ENCODE measurements at regions of chr19 and their contacts with region 1.

Region 1: DNA sequence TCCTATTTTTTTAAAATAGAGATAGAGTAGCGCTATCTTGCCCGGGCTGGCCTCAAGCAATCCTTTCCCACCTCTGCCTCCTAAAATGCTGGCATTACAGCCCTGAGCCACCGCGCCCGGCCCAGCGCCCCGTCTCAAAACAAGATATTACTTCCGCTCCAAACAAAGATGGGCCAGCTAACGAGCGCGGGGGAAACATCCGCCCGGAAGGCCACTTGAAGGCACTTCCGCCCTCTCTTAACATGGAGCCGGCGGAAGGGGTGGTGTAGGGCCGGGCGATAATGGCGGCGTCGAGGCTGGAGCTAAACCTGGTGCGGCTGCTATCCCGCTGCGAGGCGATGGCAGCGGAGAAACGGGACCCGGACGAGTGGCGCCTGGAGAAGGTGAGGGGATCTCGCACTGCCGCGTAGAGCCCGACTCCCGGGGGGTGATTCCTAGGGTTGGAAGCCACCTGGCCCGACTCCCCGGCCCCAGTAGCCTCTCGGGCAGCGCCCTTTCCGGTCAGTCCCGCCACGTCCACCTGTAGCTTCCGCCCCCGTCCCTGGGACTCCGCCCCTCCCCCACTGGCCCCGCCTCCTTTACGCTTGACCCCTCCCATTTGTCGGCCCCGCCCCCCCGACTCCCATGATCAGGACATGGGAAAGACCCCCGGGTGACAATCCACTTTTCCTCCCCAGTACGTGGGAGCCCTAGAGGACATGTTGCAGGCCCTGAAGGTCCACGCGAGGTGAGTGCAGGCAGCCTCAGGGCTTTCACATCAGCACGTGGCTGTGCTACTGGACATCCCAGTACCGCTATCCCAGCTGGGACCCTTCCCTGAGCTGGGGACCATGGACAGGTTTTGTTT is at the start of gene USE1:
- DNase-seq: peak; percentile 80 to 93
- H3K4me3 ChIP-seq: peak within 1 kb of the TSS; percentile 63 to 79 (median 77)
- H3K27ac ChIP-seq: peak within 1 kb of the TSS; percentile 98
- H3K4me1 ChIP-seq: peaks cover 0 to 8% (median 5%) of the 10 kb centered on the region in 4 experiments; a peak in 5 of 7 replicates
- H3K27me3 ChIP-seq: no peaks in the 10 kb centered on the region
- CTCF ChIP-seq: no peak
- EP300 ChIP-seq: no peak; a peak in 1 of 3 replicates
- POLR2A ChIP-seq: peak; percentile 80 to 97
- RAD21 ChIP-seq: no peak; a peak in 1 of 4 replicates
- total RNA-seq, gene USE1: 8.7 and 11.8 TPM in 2 replicates

Region 2: GRCh38 chr19:17075035-17075863 is 140.1 kb before region 1 on chr19 and contains the starts of genes HAUS8 and MYO9B:
- CTCF ChIA-PET with region 1: no interaction called
- POLR2A ChIA-PET with region 1: interaction called, 13 read pairs
- DNase-seq: peak; percentile 98
- H3K4me3 ChIP-seq: peak within 1 kb of the TSS; percentile 72 to 96 (median 82)
- H3K27ac ChIP-seq: peak within 1 kb of the TSS; percentile 91
- H3K4me1 ChIP-seq: peaks cover 4 to 13% (median 9%) of the 10 kb centered on the region in 4 experiments
- H3K27me3 ChIP-seq: no peaks in the 10 kb centered on the region
- CTCF ChIP-seq: no peak
- EP300 ChIP-seq: peak in 1 of 2 experiments; percentile 100; a peak in 2 of 3 replicates
- POLR2A ChIP-seq: peak in 1 of 2 experiments; percentile 96; a peak in 2 of 3 replicates
- RAD21 ChIP-seq: no peak
- total RNA-seq, gene HAUS8: 23.2 and 23.5 TPM in 2 replicates
- total RNA-seq, gene MYO9B: 76.8 and 77.1 TPM in 2 replicates

Region 3: DNA sequence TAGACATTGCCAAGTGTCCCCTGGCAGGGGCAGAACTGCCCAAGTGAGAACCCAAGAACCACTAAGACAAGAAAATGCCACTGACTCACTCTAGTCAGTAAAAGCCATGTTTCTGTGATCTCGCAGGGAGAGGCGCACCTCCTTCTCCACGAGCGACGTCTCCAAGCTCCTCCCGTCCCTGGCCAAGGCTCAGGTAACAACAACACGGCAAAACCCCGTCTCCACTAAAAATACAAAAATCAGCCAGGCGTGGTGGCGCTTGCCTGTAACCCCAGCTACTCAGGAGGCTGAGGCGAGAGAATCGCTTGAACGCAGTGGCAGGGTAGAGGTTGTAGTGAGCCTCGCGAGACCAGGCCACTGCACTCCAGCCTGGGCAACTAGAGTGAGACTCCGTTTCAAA is 17.7 kb before region 1 on chr19:
- CTCF ChIA-PET with region 1: no interaction called
- POLR2A ChIA-PET with region 1: no interaction called
- DNase-seq: no peak
- H3K4me3 ChIP-seq: no peak overlapping the region
- H3K27ac ChIP-seq: no peak overlapping the region
- H3K4me1 ChIP-seq: no peaks in the 10 kb centered on the region
- H3K27me3 ChIP-seq: no peaks in the 10 kb centered on the region
- CTCF ChIP-seq: no peak
- EP300 ChIP-seq: no peak
- POLR2A ChIP-seq: no peak
- RAD21 ChIP-seq: no peak

Region 4: DNA sequence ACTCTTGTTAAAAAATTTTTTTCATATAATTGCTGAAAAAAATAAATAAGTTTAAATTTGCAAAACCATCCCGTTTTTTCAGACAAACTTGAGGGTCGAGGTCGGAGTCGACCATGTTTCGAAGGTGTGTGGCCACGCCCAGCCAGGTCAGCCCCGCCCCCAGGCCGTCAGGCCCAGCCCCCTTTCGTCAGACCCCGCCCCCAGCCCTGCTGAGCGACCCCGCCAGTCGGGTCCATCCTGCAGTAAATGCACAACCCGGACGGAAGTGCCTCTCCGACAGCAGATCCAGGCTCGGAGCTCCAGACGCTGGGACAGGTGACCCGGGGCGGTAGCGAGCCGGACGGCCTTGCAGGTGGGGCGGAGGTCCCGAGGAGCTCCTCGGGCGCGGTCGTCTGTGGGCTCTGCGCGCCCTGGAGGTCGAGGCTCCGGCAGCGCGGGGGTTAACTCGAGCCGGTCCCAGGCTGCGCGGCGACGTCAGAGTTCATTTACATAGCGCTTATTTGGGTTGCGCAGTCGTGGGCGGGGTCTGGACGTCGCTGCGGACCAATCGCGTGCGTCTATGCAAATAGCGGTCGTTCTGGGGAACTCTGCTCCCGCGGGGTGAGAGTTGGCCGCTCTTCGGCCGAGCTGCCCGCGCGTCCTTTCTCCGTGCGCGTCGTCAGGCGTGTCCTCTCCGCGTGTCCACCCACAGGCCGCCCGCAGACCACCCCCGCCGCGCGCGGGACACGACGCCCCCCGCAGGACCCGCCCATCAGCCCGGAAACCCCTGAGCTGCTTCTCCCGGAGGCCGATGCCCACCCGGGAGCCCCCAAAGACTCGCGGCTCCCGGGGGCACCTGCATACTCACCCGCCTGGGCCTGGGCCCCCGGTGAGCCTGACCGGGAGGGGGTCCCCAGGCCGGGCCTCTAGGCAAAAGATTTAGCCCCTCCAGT is 10.9 kb after region 1 on chr19 and contains the start of gene OCEL1:
- CTCF ChIA-PET with region 1: interaction called, 4 read pairs
- POLR2A ChIA-PET with region 1: interaction called, 79 read pairs
- DNase-seq: peak; percentile 89 to 96
- H3K4me3 ChIP-seq: peak within 1 kb of the TSS; percentile 52 to 80 (median 65)
- H3K27ac ChIP-seq: peak within 1 kb of the TSS; percentile 84; the same call in 1 of the 2 replicates
- H3K4me1 ChIP-seq: peaks cover 0 to 4% (median 3%) of the 10 kb centered on the region in 4 experiments; a peak in 6 of 7 replicates
- H3K27me3 ChIP-seq: no peaks in the 10 kb centered on the region
- CTCF ChIP-seq: no peak
- EP300 ChIP-seq: no peak
- POLR2A ChIP-seq: peak; percentile 50 to 86
- RAD21 ChIP-seq: no peak
- total RNA-seq, gene OCEL1: 32.1 and 32.6 TPM in 2 replicates

Region 5: DNA sequence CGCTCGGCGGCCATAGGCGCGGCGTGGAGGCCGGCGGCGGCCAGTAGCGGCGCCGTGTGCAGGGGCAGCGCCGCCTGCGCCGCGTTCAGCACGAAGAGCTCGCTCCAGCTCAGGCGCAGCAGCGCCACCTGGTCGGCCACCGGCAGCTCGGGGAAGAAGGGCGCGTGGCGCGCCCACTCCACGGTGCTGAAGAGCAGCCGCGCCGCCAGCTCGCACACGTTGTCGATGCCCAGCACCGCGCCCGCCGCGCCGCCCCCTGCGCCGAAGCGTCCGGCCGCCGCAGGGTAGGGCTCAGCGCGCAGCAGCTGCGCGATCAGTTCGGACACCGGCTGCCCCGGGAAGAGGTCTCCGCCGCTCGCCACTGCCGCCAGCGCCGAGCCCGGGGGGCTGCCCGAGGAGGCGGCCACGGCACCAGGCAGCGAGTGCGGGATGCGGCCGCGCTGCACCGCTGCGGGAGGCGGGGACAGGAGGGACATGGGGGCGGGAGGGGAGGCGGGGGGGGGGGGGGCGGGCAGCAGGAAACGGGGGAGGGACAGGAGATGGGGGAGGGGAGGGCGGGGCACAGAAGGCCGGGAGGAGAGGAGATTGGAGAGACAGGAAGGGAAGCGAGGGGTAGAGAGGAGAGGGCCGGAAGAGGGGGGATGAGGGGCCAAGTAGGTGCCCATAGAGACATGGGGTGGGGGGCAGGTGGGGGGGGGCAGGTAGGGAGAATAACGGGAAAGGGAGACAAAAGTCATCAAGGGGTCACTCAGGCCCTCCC is 20.4 kb after region 1 on chr19:
- CTCF ChIA-PET with region 1: interaction called, 4 read pairs
- POLR2A ChIA-PET with region 1: interaction called, 79 read pairs
- DNase-seq: peak in 1 of 2 experiments; percentile 80
- H3K4me3 ChIP-seq: peak overlapping the region; percentile 80 to 89 (median 86)
- H3K27ac ChIP-seq: peak overlapping the region; percentile 64; the same call in 1 of the 2 replicates
- H3K4me1 ChIP-seq: peaks cover 3 to 11% (median 7%) of the 10 kb centered on the region in 4 experiments
- H3K27me3 ChIP-seq: no peaks in the 10 kb centered on the region
- CTCF ChIP-seq: peak; percentile 32 to 51 (median 45)
- EP300 ChIP-seq: no peak
- POLR2A ChIP-seq: no peak; a peak in 1 of 3 replicates
- RAD21 ChIP-seq: peak; percentile 23 to 37

Region 6: GRCh38 chr19:17266975-17267788 is 51.8 kb after region 1 on chr19 and contains the start of gene BABAM1:
- CTCF ChIA-PET with region 1: interaction called, 4 read pairs
- POLR2A ChIA-PET with region 1: interaction called, 15 read pairs
- DNase-seq: peak; percentile 88 to 96
- H3K4me3 ChIP-seq: peak within 1 kb of the TSS; percentile 71 to 100 (median 95)
- H3K27ac ChIP-seq: peak within 1 kb of the TSS; percentile 60; the same call in 1 of the 2 replicates
- H3K4me1 ChIP-seq: peaks cover 0 to 8% (median 2%) of the 10 kb centered on the region in 4 experiments; a peak in 5 of 7 replicates
- H3K27me3 ChIP-seq: no peaks in the 10 kb centered on the region
- CTCF ChIP-seq: no peak
- EP300 ChIP-seq: no peak
- POLR2A ChIP-seq: peak; percentile 50 to 94
- RAD21 ChIP-seq: no peak
- total RNA-seq, gene BABAM1: 127 and 134 TPM in 2 replicates

Region 7: GRCh38 chr19:17305517-17306284 is 90.4 kb after region 1 on chr19 and contains the start of gene MRPL34:
- CTCF ChIA-PET with region 1: interaction called, 3 read pairs
- POLR2A ChIA-PET with region 1: interaction called, 10 read pairs
- DNase-seq: peak; percentile 96 to 100
- H3K4me3 ChIP-seq: peak within 1 kb of the TSS; percentile 75 to 95 (median 80)
- H3K27ac ChIP-seq: peak within 1 kb of the TSS; percentile 81
- H3K4me1 ChIP-seq: peaks cover 14 to 28% (median 19%) of the 10 kb centered on the region in 4 experiments
- H3K27me3 ChIP-seq: no peaks in the 10 kb centered on the region
- CTCF ChIP-seq: peak; percentile 67 to 88 (median 81)
- EP300 ChIP-seq: peak; percentile 23 to 61; a peak in 1 of 3 replicates
- POLR2A ChIP-seq: peak; percentile 19 to 66
- RAD21 ChIP-seq: peak; percentile 47 to 63
- total RNA-seq, gene MRPL34: 99.6 and 100 TPM in 2 replicates